ENCODE measurements at regions of chr17 and their contacts with region 1.

Region 1: DNA sequence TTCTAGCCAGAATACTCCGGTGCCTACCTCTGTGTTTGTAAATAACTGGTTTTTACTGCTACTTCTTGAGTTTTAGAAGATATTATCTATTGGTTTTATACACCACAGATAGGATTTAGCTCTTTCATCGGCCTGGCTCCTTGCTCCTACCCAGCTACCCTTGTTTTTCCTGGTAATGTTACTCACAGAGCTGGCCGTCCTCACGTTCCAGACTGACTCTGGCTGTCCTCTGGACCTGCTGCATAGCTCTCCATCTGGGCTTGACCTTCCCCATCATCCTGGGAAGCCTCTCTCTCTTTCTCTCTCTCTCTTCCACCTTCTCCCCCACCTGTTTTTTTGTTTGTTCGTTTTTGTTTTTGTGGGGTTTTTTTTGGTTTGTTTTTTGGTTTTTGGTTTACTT is 51.5 kb downstream of the MPRIP start:
- DNase-seq: no peak
- ATAC-seq: peak in 1 of 2 donors; percentile 40
- H3K4me3 ChIP-seq: no peak overlapping the region
- H3K27ac ChIP-seq: peak overlapping the region; percentile 55 to 72 (median 64)
- H3K4me1 ChIP-seq: peaks cover 82 to 86% of the 10 kb centered on the region in 2 donors
- H3K27me3 ChIP-seq: no peaks in the 10 kb centered on the region
- CTCF ChIP-seq: no peak
- POLR2A ChIP-seq: no peak

Region 2: DNA sequence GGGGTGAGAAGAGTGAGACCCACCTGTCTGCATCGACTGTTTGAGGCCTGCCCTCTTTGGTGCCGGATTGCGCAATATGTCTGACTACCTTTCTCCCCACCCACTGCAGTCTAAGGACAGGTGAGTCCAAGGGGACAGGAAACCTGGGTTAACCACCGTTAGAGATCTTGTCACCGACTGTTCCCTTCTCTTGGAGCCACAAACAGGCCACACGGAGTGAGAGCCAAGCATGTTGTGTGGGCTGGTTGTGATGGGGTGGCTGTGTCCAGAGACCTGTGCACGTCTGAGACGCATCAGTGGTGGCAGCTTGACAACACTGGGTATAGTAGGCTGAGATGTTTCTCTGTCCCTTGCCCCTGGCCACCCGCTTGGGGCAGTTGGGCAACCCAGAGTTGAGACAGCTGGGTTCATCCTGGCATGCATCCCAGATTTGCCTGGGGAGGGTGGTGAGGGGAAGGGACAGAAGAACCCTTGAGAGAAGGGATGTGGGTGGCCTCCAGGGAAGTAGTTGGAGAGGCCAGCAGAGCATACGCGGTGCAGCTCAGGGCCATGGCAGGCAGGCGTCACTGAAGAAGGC is 30.1 kb before region 1 on chr17:
- in situ Hi-C with region 1: no loop called
- intact Hi-C with region 1: loop called (anchors 2 kb)
- DNase-seq: peak; percentile 90 to 97
- ATAC-seq: peak; percentile 91 to 92
- H3K4me3 ChIP-seq: no peak overlapping the region
- H3K27ac ChIP-seq: peak overlapping the region; percentile 77 to 86 (median 78)
- H3K4me1 ChIP-seq: peaks cover 87% of the 10 kb centered on the region in 2 donors
- H3K27me3 ChIP-seq: no peaks in the 10 kb centered on the region
- CTCF ChIP-seq: no peak
- POLR2A ChIP-seq: no peak

Measured in gastrocnemius medialis (tissue), 4 donors.